Endothelial cell of umbilical vein (primary cell): ENCODE measurements at regions of chr15 and their contacts with region 1.

Region 1: DNA sequence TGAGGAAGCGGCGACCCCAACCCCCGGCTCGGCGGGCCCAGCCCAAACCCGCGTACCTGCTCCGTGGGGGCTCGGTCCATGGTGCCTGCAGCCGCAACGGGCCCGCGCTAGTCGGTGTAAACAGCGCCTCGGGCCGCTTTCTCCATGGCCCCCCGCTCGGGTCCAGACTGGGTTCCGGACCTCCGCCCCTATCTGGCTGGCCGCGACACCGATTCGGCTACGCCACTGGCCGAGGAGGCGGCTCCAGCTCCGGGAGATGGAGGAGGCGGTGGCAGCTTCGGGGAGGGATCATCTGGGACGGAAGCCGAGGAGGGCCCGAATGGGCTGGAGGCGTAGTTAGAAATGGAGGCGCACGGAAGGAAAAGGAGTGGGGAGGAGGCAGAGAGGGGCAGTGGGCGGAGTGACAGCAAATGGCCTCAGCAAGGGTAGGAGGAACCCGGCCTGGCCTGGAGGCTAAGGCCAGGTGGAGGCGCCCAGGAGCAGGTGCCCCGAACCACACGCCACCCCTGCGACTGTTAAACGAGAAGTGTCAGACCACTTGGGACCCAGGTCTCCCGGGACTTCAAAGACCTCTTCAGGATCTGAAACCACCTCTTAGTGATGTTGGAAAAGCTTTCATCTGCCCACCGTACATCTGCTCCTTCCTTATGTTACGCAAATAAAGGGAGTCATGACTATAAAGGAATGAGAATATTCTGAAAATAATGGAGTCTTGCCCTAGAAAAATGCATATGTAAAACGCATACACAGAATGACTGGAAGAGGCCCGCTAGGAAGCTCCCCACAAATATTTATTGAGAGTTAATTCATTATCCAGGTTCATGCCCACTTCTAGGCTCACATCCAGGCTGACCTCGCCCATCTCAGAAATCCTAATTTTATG is at the start of gene SECISBP2L:
- DNase-seq: peak; percentile 97
- H3K4me3 ChIP-seq: peak within 1 kb of the TSS; percentile 75 to 98 (median 80)
- H3K27ac ChIP-seq: peak within 1 kb of the TSS; percentile 74
- H3K4me1 ChIP-seq: peaks cover 18% of the 10 kb centered on the region
- H3K27me3 ChIP-seq: peaks cover 0 to 1% of the 10 kb centered on the region in 2 experiments
- CTCF ChIP-seq: peak; percentile 23 to 49
- POLR2A ChIP-seq: peak; percentile 51
- total RNA-seq, gene SECISBP2L: 44.7 and 52.3 TPM in 2 replicates

Region 2: GRCh38 chr15:48352474-48353072 is 693.9 kb before region 1 on chr15:
- CTCF ChIA-PET with region 1: no interaction called
- POLR2A ChIA-PET with region 1: no interaction called
- dilution Hi-C with region 1: no loop called
- intact Hi-C with region 1: loop called (anchors 10 kb)
- DNase-seq: peak; percentile 67
- H3K4me3 ChIP-seq: no peak overlapping the region
- H3K27ac ChIP-seq: no peak overlapping the region
- H3K4me1 ChIP-seq: no peaks in the 10 kb centered on the region
- H3K27me3 ChIP-seq: no peaks in the 10 kb centered on the region
- CTCF ChIP-seq: peak; percentile 68 to 69
- POLR2A ChIP-seq: no peak

Region 3: DNA sequence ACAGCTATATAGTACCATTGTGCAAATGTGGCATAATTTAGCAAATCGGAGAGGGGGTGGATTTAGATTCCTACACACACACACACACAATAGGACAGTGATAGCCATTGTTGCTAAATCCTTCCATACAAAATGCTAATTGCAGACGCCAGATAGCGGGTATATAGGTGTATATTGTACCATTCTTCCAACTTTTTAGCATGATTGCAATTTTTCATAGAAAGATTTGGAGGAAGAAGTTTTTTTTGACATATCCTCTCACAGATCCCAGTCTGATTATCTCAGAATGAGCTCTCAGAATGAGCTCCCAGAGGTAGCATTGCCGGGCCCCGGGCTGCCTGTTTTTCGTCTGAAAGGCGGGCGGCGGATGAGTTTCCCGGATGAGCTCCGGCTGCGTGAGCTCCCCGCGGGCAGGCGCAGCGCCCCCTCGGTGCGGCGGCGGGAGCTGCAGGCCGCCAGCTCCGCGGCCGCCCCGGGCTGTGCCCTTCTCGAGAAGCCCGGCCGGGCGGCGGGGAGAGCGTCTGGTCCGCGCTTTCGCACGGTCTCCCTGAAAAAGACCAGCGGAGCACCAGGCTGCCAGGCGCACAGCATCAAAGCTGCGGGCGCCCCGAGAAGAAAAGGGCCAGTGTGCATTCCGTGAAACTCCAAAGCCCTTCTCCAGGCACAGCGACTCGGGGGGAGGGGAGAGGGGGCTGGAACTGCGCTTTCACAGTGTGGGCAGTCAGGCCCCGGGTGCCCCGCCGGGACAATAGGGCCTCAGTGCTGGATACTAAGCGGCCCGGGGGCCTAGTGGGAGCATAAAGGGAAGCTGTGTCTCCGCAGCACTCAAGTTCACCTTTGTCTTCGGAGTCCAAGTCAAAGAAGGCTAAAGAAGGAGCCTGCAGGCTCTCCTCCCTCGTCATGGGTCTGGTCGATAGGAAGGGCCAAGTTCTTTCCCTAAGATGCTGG is 70.7 kb before region 1 on chr15:
- CTCF ChIA-PET with region 1: interaction called, 12 read pairs
- POLR2A ChIA-PET with region 1: no interaction called
- dilution Hi-C with region 1: no loop called
- intact Hi-C with region 1: no loop called
- DNase-seq: peak; percentile 79
- H3K4me3 ChIP-seq: peak overlapping the region; percentile 34 to 61 (median 58)
- H3K27ac ChIP-seq: no peak overlapping the region
- H3K4me1 ChIP-seq: peaks cover 8% of the 10 kb centered on the region
- H3K27me3 ChIP-seq: no peaks in the 10 kb centered on the region
- CTCF ChIP-seq: peak; percentile 81 to 98
- POLR2A ChIP-seq: no peak

Region 4: DNA sequence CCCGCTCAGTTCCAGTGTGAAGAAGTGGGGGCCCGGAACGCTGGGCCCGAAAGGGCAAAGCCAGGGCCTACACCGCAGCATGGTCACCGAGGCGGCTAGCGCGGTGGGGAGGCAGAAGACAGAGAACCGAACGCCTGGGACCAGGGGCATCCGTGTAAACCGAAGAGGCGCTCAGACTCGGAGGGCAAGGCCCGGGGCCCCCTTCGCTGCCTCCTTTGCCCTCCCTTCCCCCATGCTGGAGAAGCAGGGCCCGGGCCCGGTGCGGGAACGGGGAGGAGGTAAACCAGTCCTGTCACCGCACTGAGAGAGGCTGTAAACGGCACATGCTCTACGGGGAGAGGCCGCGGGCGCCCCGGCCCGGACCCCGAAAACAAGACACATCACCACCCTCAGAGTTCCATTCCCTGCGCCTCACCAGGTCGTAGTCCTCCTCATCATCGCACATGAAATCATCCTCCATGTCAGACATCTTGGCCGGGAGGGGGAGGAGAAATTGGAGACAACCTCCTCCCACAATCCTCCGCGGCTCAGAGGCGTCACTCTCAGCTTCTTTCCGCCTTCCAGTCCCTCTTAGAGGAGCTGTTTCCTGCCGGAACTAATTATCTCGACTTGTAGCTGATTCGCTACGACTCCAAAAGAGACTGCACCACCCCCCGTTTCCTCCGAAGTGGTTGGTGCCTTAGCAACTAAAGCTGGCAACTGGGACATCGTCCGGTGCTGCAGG is 108.8 kb after region 1 on chr15 and contains the start of gene COPS2:
- CTCF ChIA-PET with region 1: interaction called, 5 read pairs
- POLR2A ChIA-PET with region 1: no interaction called
- dilution Hi-C with region 1: no loop called
- intact Hi-C with region 1: loop called (anchors 1 kb)
- DNase-seq: peak; percentile 99
- H3K4me3 ChIP-seq: peak within 1 kb of the TSS; percentile 82 to 96 (median 83)
- H3K27ac ChIP-seq: peak within 1 kb of the TSS; percentile 62
- H3K4me1 ChIP-seq: peaks cover 23% of the 10 kb centered on the region
- H3K27me3 ChIP-seq: no peaks in the 10 kb centered on the region
- CTCF ChIP-seq: no peak
- POLR2A ChIP-seq: peak; percentile 60
- total RNA-seq, gene COPS2: 74.9 and 79.3 TPM in 2 replicates